ENCODE measurements at regions of chr2 and their contacts with region 1.

Region 1: GRCh38 chr2:112685271-112685884 is 35.4 kb upstream of the NT5DC4 start:
- DNase-seq: no peak
- ATAC-seq: no peak
- H3K4me3 Mint-ChIP-seq: no peak overlapping the region
- H3K27ac Mint-ChIP-seq: no peak overlapping the region
- H3K4me1 Mint-ChIP-seq: peaks cover 5% of the 10 kb centered on the region
- H3K27me3 Mint-ChIP-seq: no peaks in the 10 kb centered on the region

Region 2: DNA sequence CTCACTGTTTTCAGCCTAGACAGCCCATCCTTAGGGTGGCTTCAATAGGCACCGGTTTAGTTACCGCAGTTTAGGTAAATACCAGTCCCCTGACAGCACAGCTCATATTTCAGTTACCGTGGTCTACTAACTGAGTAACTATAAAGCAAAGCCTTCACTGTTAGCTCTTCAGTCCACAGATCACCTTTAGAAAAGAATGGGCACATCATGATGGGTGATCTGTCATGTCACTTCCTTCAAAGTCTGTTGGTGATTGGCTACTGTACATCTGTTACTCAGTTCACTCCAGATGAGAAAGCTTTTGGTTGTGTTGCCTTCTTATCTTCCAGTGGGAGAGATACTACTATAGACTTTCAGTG is 18.6 kb before region 1 on chr2:
- CTCF ChIA-PET with region 1: interaction called, 5 read pairs
- POLR2A ChIA-PET with region 1: interaction called, 3 read pairs
- intact Hi-C with region 1: loop called in 1 of 2 experiments (anchors 2 kb)
- DNase-seq: no peak
- ATAC-seq: peak; percentile 39
- H3K4me3 Mint-ChIP-seq: no peak overlapping the region
- H3K27ac Mint-ChIP-seq: no peak overlapping the region
- H3K4me1 Mint-ChIP-seq: no peaks in the 10 kb centered on the region
- H3K27me3 Mint-ChIP-seq: no peaks in the 10 kb centered on the region

Region 3: DNA sequence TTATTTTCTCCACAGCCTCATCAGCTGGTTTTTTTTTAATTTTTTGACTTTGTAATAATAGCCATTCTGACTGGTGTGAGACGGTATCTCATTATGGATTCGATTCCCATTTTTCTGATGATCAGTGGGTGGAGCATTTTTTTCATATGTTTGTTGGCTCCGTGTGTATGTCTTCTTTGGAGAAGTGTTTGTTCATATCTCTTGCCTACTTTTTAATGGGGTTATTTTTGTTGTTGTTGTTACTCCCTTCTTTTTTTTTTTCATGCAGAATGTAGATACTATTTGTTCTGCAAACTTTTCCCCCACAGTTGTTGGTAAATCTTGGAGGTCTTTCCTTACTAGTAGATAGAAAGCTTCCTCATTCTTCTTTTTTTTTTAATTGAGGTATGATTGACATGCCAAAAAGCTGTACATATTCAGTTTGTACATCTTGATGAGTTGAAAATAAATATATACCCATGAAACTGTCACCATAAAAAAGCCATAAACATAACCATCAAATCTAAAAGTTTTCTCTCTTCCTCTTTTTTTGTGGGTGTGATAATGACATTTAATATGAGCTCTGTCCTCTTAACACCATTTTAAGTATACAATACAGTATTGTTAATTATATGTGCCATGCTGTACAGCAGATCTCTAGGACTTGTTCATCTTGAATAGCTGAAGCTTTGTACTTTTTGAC is 13.6 kb after region 1 on chr2:
- CTCF ChIA-PET with region 1: interaction called, 11 read pairs
- POLR2A ChIA-PET with region 1: interaction called, 3 read pairs
- intact Hi-C with region 1: no loop called
- DNase-seq: no peak
- ATAC-seq: no peak
- H3K4me3 Mint-ChIP-seq: no peak overlapping the region
- H3K27ac Mint-ChIP-seq: no peak overlapping the region
- H3K4me1 Mint-ChIP-seq: peaks cover 2% of the 10 kb centered on the region
- H3K27me3 Mint-ChIP-seq: peaks cover 5% of the 10 kb centered on the region

Measured in activated CD4-positive, alpha-beta T cell treated with anti-CD3 and anti-CD28 coated beads for 36 hours (primary cell).